ENCODE measurements at regions of chr5 and their contacts with region 1.

Region 1: DNA sequence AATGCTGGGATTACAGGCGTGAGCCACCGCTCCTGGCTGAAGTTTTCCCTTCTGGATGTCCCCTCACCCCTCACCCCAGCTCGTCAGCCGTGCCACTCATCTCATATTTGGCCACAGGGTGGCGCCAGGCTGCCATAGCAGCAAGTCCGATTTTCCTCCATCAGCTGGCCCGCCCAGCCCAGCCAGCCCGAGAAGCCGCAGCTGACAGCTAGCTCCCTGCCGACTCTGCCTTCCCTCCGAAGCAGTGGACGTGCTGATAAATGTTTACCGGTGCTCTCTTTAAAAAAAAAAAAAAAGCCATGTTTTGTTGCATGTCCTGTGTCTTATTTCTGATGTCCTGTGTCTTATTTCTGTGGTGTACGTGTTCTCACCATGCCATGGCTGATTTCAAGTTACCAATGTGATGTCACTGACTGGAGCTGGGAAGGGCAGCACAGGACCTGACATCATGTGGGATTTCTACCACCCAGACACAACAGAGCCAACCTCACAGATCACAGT is 58.3 kb downstream of the PFDN1 start:
- DNase-seq: peak; percentile 90
- ATAC-seq: peak; percentile 61
- H3K4me3 ChIP-seq: no peak overlapping the region
- H3K27ac ChIP-seq: no peak overlapping the region
- H3K4me1 ChIP-seq: peaks cover 31% of the 10 kb centered on the region
- H3K27me3 ChIP-seq: no peaks in the 10 kb centered on the region
- CTCF ChIP-seq: peak; percentile 97
- POLR2A ChIP-seq: peak; percentile 50; the same call in 1 of the 2 replicates
- RAD21 ChIP-seq: peak; percentile 97

Region 2: DNA sequence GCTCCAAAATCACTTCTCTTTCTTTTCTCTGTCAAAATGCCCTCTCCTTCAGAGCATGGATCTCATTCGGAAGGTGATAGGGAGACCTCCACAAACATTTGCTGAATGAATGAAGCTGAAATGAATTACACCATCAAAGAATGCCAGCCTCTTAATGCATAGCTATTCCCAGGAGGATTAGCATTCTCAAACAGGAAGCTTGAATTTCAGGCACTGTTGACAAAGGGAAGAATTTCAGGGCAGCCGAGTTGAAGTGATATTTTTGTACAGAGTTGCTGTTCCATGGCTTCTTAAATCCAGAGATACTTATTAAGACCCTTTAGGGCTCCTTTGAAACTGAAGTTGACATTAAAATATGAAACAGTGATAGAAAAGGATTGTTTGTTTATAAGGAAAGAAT is 83.0 kb after region 1 on chr5:
- CTCF ChIA-PET with region 1: interaction called, 10 read pairs
- POLR2A ChIA-PET with region 1: no interaction called
- dilution Hi-C with region 1: no loop called
- in situ Hi-C with region 1: no loop called
- intact Hi-C with region 1: no loop called
- DNase-seq: peak; percentile 53
- ATAC-seq: no peak
- H3K4me3 ChIP-seq: no peak overlapping the region
- H3K27ac ChIP-seq: no peak overlapping the region
- H3K4me1 ChIP-seq: peaks cover 21% of the 10 kb centered on the region
- H3K27me3 ChIP-seq: no peaks in the 10 kb centered on the region
- CTCF ChIP-seq: no peak
- POLR2A ChIP-seq: no peak
- RAD21 ChIP-seq: no peak

Region 3: GRCh38 chr5:140346348-140347101 is 102.0 kb after region 1 on chr5 and contains the start of gene HBEGF:
- CTCF ChIA-PET with region 1: interaction called, 233 read pairs
- POLR2A ChIA-PET with region 1: interaction called, 3 read pairs
- dilution Hi-C with region 1: no loop called
- in situ Hi-C with region 1: loop called (anchors 5 kb)
- intact Hi-C with region 1: loop called (anchors 1 kb)
- DNase-seq: peak; percentile 63
- ATAC-seq: peak; percentile 93
- H3K4me3 ChIP-seq: peak within 1 kb of the TSS; percentile 74
- H3K27ac ChIP-seq: peak within 1 kb of the TSS; percentile 22; the same call in 1 of the 2 replicates
- H3K4me1 ChIP-seq: peaks cover 11% of the 10 kb centered on the region
- H3K27me3 ChIP-seq: no peaks in the 10 kb centered on the region
- CTCF ChIP-seq: peak; percentile 37
- POLR2A ChIP-seq: peak; percentile 98
- RAD21 ChIP-seq: no peak
- total RNA-seq, gene HBEGF: 18.8 and 26.9 TPM in 2 replicates

Region 4: GRCh38 chr5:140357726-140358093 is 113.1 kb after region 1 on chr5:
- CTCF ChIA-PET with region 1: interaction called, 233 read pairs
- POLR2A ChIA-PET with region 1: no interaction called
- dilution Hi-C with region 1: no loop called
- in situ Hi-C with region 1: loop called (anchors 5 kb)
- intact Hi-C with region 1: loop called (anchors 1 kb)
- DNase-seq: peak; percentile 83
- ATAC-seq: peak; percentile 99
- H3K4me3 ChIP-seq: peak overlapping the region; percentile 5; the same call in 1 of the 2 replicates
- H3K27ac ChIP-seq: no peak overlapping the region
- H3K4me1 ChIP-seq: no peaks in the 10 kb centered on the region
- H3K27me3 ChIP-seq: no peaks in the 10 kb centered on the region; the same call in 1 of the 2 replicates
- CTCF ChIP-seq: peak; percentile 96
- POLR2A ChIP-seq: no peak
- RAD21 ChIP-seq: peak; percentile 87

Region 5: DNA sequence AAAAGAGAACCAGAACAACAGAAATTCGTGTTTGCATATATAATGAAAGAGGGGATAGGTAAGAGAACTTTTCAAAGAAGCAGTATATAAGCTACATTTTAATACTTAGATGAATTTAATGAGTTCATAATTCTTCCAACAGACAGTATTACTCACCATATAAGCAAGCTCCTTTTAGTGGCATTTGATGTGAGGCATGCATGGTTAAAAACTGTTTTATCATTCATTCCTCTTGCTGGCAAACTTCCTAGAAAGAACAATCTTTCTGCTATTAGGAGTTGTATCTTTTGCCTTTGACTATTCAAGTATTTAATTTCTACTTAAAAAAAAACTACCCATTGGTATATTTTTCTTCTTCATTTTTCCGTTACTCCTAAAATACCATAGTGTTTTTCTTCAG is 237.2 kb after region 1 on chr5:
- CTCF ChIA-PET with region 1: no interaction called
- POLR2A ChIA-PET with region 1: no interaction called
- dilution Hi-C with region 1: no loop called
- in situ Hi-C with region 1: no loop called
- intact Hi-C with region 1: loop called (anchors 5 kb)
- DNase-seq: peak; percentile 83
- ATAC-seq: peak; percentile 79
- H3K4me3 ChIP-seq: no peak overlapping the region
- H3K27ac ChIP-seq: no peak overlapping the region
- H3K4me1 ChIP-seq: no peaks in the 10 kb centered on the region
- H3K27me3 ChIP-seq: no peaks in the 10 kb centered on the region
- CTCF ChIP-seq: no peak
- POLR2A ChIP-seq: no peak
- RAD21 ChIP-seq: no peak

Region 6: GRCh38 chr5:140690941-140691924 is 446.7 kb after region 1 on chr5 and contains the starts of genes HARS1 and HARS2:
- CTCF ChIA-PET with region 1: no interaction called
- POLR2A ChIA-PET with region 1: no interaction called
- dilution Hi-C with region 1: no loop called
- in situ Hi-C with region 1: no loop called
- intact Hi-C with region 1: loop called (anchors 10 kb)
- DNase-seq: peak; percentile 95
- ATAC-seq: peak; percentile 95
- H3K4me3 ChIP-seq: peak within 1 kb of the TSS; percentile 83
- H3K27ac ChIP-seq: peak within 1 kb of the TSS; percentile 92
- H3K4me1 ChIP-seq: peaks cover 2% of the 10 kb centered on the region; the same call in 1 of the 2 replicates
- H3K27me3 ChIP-seq: no peaks in the 10 kb centered on the region
- CTCF ChIP-seq: 0 out of 2 replicates have a peak, but pooled peaks have one; percentile 5
- POLR2A ChIP-seq: peak; percentile 84
- RAD21 ChIP-seq: no peak; the same call in 1 of the 2 replicates
- total RNA-seq, gene HARS1: 134 and 141 TPM in 2 replicates
- total RNA-seq, gene HARS2: 30.1 and 36.9 TPM in 2 replicates